ENCODE measurements at regions of chr3 and their contacts with region 1.

Region 1: GRCh38 chr3:146544002-146544928 is at the start of gene PLSCR1:
- DNase-seq: peak; percentile 89
- ATAC-seq: peak; percentile 86
- H3K4me3 Mint-ChIP-seq: peak within 1 kb of the TSS; percentile 87
- H3K27ac Mint-ChIP-seq: peak within 1 kb of the TSS; percentile 90
- H3K4me1 Mint-ChIP-seq: peaks cover 56% of the 10 kb centered on the region
- H3K27me3 Mint-ChIP-seq: no peaks in the 10 kb centered on the region
- CTCF ChIP-seq: no peak
- total RNA-seq, gene PLSCR1: 36.4 to 38.9 TPM

Region 2: DNA sequence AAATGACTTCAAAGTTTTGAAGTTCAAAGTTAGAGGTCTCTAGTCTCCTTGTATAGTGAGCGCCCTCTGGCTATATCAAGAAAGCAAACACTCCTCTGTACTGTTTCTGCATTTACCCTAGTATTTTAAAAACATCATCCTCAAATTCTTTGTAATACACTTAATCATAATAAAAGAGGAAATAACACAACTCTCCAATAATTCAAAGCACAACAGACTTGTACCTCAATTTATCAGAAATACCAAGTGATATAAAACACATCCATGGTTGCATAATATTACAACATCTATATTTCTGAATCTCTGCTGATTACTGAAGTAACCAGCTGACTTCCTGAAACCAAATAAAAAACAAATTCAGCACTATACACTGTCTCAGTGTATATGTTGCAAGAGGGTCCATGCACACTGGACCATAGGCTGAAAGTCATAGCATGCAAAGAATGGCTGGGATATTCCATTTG is 395.8 kb before region 1 on chr3:
- CTCF ChIA-PET with region 1: no interaction called
- POLR2A ChIA-PET with region 1: no interaction called
- intact Hi-C with region 1: no loop called
- DNase-seq: no peak
- ATAC-seq: no peak
- H3K4me3 Mint-ChIP-seq: no peak overlapping the region
- H3K27ac Mint-ChIP-seq: no peak overlapping the region
- H3K4me1 Mint-ChIP-seq: no peaks in the 10 kb centered on the region
- H3K27me3 Mint-ChIP-seq: no peaks in the 10 kb centered on the region
- CTCF ChIP-seq: no peak

Region 3: GRCh38 chr3:146503461-146504202 is 40.6 kb before region 1 on chr3:
- CTCF ChIA-PET with region 1: interaction called, 3 read pairs
- POLR2A ChIA-PET with region 1: interaction called, 5 read pairs
- intact Hi-C with region 1: loop called (anchors 5 kb)
- DNase-seq: peak; percentile 50
- ATAC-seq: peak; percentile 56
- H3K4me3 Mint-ChIP-seq: no peak overlapping the region
- H3K27ac Mint-ChIP-seq: no peak overlapping the region
- H3K4me1 Mint-ChIP-seq: peaks cover 26% of the 10 kb centered on the region
- H3K27me3 Mint-ChIP-seq: no peaks in the 10 kb centered on the region
- CTCF ChIP-seq: no peak

Region 4: GRCh38 chr3:146529021-146529420 is 15.2 kb before region 1 on chr3:
- CTCF ChIA-PET with region 1: interaction called, 3 read pairs
- POLR2A ChIA-PET with region 1: interaction called, 4 read pairs
- intact Hi-C with region 1: loop called (anchors 2 kb)
- DNase-seq: no peak
- ATAC-seq: no peak
- H3K4me3 Mint-ChIP-seq: no peak overlapping the region
- H3K27ac Mint-ChIP-seq: no peak overlapping the region
- H3K4me1 Mint-ChIP-seq: no peaks in the 10 kb centered on the region
- H3K27me3 Mint-ChIP-seq: no peaks in the 10 kb centered on the region
- CTCF ChIP-seq: no peak

Region 5: DNA sequence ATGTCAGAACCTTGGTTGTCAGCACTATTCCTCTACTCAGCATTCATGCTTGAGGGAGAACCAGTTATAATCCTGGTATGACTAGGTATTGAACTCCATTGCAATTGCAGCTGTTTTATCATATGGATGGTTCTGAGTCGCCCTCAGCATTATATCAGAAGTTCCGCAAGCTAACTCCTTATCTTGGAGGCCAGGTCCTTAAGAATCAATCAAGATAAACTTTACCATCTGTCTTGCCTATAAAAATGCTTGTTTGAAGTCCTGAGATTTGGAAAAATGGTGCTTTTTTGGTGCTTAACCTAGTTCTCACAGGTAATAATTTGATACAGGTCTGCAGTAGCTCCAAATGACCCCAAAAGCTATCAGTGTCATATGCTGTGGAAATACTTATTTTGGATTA is 16.4 kb after region 1 on chr3:
- CTCF ChIA-PET with region 1: no interaction called
- POLR2A ChIA-PET with region 1: no interaction called
- intact Hi-C with region 1: no loop called
- DNase-seq: no peak
- ATAC-seq: no peak
- H3K4me3 Mint-ChIP-seq: no peak overlapping the region
- H3K27ac Mint-ChIP-seq: no peak overlapping the region
- H3K4me1 Mint-ChIP-seq: no peaks in the 10 kb centered on the region
- H3K27me3 Mint-ChIP-seq: peaks cover 1% of the 10 kb centered on the region
- CTCF ChIP-seq: no peak

Region 6: GRCh38 chr3:146682171-146682570 is 137.9 kb after region 1 on chr3:
- CTCF ChIA-PET with region 1: no interaction called
- POLR2A ChIA-PET with region 1: no interaction called
- intact Hi-C with region 1: no loop called
- DNase-seq: no peak
- ATAC-seq: no peak
- H3K4me3 Mint-ChIP-seq: no peak overlapping the region
- H3K27ac Mint-ChIP-seq: no peak overlapping the region
- H3K4me1 Mint-ChIP-seq: no peaks in the 10 kb centered on the region
- H3K27me3 Mint-ChIP-seq: no peaks in the 10 kb centered on the region
- CTCF ChIP-seq: no peak